IMR-90 (cell line): ENCODE measurements at regions of chr20 and their contacts with region 1.

Region 1: DNA sequence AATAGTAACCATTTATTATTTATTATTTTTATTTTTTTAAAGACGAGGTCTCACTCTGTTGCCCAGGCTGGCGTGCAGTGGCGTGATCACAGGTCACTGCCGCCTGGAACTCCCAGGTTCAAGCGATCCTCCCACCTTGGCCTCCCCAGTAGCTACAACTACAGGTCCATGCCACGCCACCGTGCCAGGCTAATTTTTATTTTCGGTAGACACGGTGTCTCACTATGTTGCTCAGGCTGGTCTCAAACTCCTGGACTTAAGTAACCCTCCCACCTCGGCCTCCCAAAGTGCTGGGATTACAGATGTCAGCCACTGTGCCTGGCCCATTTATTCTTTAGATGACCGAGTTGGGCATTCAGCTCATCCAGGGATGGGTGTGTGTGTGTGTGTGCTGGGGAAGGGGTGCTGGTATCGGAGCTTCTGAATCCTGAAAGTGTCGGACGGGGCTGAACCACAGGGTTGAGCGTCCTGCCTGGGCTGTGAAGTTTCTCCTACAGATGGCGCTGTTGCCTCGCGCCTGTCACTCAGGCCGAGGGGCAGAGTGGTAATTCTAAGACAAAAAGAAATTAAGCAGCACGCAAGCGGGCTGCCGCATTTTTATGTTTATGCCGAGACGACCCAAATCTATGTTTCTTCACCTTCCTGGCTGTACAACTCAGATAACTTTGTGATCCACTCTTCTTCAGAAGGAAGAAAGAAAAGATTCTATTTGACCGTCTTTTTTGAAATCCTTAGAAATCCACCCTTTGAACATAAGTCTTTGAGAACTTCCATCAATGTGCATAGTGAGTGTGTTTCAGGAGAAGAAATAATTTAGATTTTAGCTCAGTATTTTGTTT is 252.8 kb downstream of the CDH26 start:
- DNase-seq: peak; percentile 60
- ATAC-seq: peak; percentile 96
- H3K4me3 ChIP-seq: no peak overlapping the region
- H3K27ac ChIP-seq: no peak overlapping the region
- H3K4me1 ChIP-seq: no peaks in the 10 kb centered on the region
- H3K27me3 ChIP-seq: 0 out of 2 replicates have a peak, but pooled peaks cover 4% of the 10 kb centered on the region
- CTCF ChIP-seq: peak; percentile 97
- POLR2A ChIP-seq: peak; percentile 57
- RAD21 ChIP-seq: peak; percentile 99

Region 2: DNA sequence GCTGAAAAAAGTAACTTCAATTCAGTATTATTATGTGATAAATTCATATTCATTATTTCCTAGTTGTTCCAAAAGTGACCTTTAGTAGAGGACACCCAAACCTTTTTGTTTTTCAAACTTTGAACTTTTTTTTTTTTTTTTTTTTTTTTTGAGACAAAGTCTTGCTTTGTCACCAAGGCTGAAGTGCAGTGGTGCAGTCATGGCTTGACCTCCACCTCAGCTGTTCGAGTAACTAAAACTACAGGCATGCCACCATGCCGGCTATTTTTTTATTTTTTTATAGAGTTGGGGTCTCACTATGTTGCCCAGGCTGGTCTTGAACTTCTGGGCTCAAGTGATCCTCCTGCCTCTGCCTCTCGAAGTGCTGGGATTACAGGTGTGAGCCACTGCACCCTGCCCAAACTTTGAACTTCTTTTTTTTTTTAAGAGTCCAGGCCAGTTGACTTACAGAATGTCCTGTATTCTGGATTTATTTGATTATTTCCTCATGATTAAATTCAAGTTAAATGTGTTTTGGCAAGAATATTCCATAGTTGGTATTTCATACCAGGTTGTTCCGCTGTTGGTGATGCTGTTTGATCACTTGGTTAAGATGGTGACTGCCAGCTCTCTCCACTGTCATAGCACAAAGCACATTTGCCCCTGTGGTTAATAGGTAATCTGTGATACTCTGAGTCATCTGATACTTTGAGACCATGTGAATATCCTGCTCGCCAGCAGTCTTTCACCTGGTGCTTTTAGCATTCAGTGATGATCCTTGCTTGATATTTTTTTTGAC is 1773.9 kb before region 1 on chr20:
- CTCF ChIA-PET with region 1: no interaction called
- POLR2A ChIA-PET with region 1: no interaction called
- dilution Hi-C with region 1: no loop called
- in situ Hi-C with region 1: no loop called
- intact Hi-C with region 1: no loop called
- DNase-seq: no peak
- ATAC-seq: no peak
- H3K4me3 ChIP-seq: no peak overlapping the region
- H3K27ac ChIP-seq: no peak overlapping the region
- H3K4me1 ChIP-seq: peaks cover 15% of the 10 kb centered on the region
- H3K27me3 ChIP-seq: no peaks in the 10 kb centered on the region
- CTCF ChIP-seq: no peak
- POLR2A ChIP-seq: no peak
- RAD21 ChIP-seq: no peak

Region 3: GRCh38 chr20:60057123-60057801 is 153.7 kb before region 1 on chr20:
- CTCF ChIA-PET with region 1: interaction called, 7 read pairs
- POLR2A ChIA-PET with region 1: no interaction called
- dilution Hi-C with region 1: no loop called
- in situ Hi-C with region 1: no loop called
- intact Hi-C with region 1: loop called (anchors 1 kb)
- DNase-seq: peak; percentile 65
- ATAC-seq: peak; percentile 83
- H3K4me3 ChIP-seq: no peak overlapping the region
- H3K27ac ChIP-seq: no peak overlapping the region
- H3K4me1 ChIP-seq: peaks cover 9% of the 10 kb centered on the region; the same call in 1 of the 2 replicates
- H3K27me3 ChIP-seq: peaks cover 7% of the 10 kb centered on the region; the same call in 1 of the 2 replicates
- CTCF ChIP-seq: peak; percentile 93
- POLR2A ChIP-seq: no peak
- RAD21 ChIP-seq: peak; percentile 91

Region 4: GRCh38 chr20:60306105-60306504 is 95.1 kb after region 1 on chr20:
- CTCF ChIA-PET with region 1: no interaction called
- POLR2A ChIA-PET with region 1: no interaction called
- dilution Hi-C with region 1: no loop called
- in situ Hi-C with region 1: no loop called
- intact Hi-C with region 1: no loop called
- DNase-seq: no peak
- ATAC-seq: no peak
- H3K4me3 ChIP-seq: no peak overlapping the region
- H3K27ac ChIP-seq: no peak overlapping the region
- H3K4me1 ChIP-seq: no peaks in the 10 kb centered on the region
- H3K27me3 ChIP-seq: no peaks in the 10 kb centered on the region
- CTCF ChIP-seq: no peak
- POLR2A ChIP-seq: no peak
- RAD21 ChIP-seq: no peak

Region 5: DNA sequence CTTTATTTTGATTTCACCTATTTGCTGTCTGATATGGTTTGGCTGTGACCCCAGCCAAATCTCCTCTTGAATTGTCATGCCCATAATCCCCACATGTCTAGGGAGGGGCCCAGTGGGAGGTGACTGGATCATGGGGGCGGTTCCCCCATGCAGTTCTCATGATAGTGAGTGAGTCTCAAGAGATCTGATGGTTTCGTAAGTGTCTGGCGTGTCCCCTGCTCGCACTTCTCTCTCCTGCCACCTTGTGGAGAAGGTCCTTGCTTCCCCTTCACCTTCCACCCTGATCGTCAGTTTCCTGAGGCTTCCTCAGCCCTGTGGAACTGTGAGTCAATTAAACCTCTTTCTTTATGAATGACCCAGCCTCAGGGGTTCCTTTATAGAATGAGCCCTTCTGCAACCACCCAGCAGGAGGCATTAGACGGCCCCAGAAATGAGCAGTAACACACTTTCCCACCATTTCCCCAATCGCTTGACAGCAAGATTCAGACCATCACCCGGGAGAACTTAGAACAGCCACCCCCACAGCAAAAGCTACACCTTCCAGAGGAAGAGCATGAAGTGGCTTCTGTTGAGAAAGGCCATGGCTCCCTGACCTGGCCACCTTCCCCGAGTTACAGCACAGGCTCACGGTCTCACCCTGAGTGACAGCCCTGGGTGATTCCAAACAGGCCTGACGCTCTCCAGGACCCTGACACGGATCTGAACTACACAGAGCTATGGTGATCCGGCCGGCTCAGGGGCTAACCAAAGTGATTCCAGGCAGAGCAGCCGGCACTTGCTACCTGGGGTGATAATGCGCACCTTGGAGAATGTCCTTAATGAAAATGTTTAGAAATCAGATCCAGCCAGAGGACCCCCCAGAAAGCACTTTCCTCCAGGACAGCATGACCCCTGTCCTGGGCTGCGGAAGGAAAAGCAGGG is 909.9 kb after region 1 on chr20:
- CTCF ChIA-PET with region 1: interaction called, 3 read pairs
- POLR2A ChIA-PET with region 1: no interaction called
- dilution Hi-C with region 1: no loop called
- in situ Hi-C with region 1: loop called (anchors 25 kb)
- intact Hi-C with region 1: loop called (anchors 1 kb)
- DNase-seq: peak; percentile 69
- ATAC-seq: peak; percentile 63
- H3K4me3 ChIP-seq: no peak overlapping the region
- H3K27ac ChIP-seq: no peak overlapping the region
- H3K4me1 ChIP-seq: no peaks in the 10 kb centered on the region
- H3K27me3 ChIP-seq: no peaks in the 10 kb centered on the region
- CTCF ChIP-seq: peak; percentile 47
- POLR2A ChIP-seq: no peak
- RAD21 ChIP-seq: peak; percentile 45

Region 6: DNA sequence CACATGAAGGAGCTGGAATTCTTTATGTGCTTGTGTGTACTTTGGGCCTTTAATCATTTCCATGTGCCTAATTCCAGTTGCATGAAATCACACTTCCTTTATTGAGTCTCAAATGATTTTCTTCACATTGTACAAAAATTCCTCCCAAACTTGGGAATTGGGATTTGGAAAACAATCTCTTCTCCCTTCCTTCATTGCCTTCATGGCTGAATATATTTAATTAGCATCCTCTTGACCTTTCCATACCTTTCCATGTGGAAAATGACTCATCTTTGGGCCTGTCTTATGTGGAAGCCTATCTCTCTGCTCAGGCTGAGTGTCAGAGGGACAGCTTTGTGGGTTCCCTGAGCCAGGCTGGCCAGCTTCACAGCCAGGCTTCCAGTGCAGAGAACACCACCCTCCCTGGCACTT is 1008.0 kb after region 1 on chr20:
- CTCF ChIA-PET with region 1: interaction called, 3 read pairs
- POLR2A ChIA-PET with region 1: no interaction called
- dilution Hi-C with region 1: no loop called
- in situ Hi-C with region 1: loop called (anchors 10 kb)
- intact Hi-C with region 1: no loop called
- DNase-seq: peak; percentile 60
- ATAC-seq: peak; percentile 70
- H3K4me3 ChIP-seq: no peak overlapping the region
- H3K27ac ChIP-seq: peak overlapping the region; percentile 65
- H3K4me1 ChIP-seq: peaks cover 9% of the 10 kb centered on the region
- H3K27me3 ChIP-seq: peaks cover 10% of the 10 kb centered on the region
- CTCF ChIP-seq: no peak
- POLR2A ChIP-seq: no peak
- RAD21 ChIP-seq: no peak

Region 7: GRCh38 chr20:61263084-61263695 is 1052.2 kb after region 1 on chr20:
- CTCF ChIA-PET with region 1: no interaction called
- POLR2A ChIA-PET with region 1: no interaction called
- dilution Hi-C with region 1: no loop called
- in situ Hi-C with region 1: no loop called
- intact Hi-C with region 1: loop called (anchors 1 kb)
- DNase-seq: peak; percentile 17
- ATAC-seq: peak; percentile 78
- H3K4me3 ChIP-seq: no peak overlapping the region
- H3K27ac ChIP-seq: no peak overlapping the region
- H3K4me1 ChIP-seq: no peaks in the 10 kb centered on the region
- H3K27me3 ChIP-seq: no peaks in the 10 kb centered on the region; the same call in 1 of the 2 replicates
- CTCF ChIP-seq: peak; percentile 83
- POLR2A ChIP-seq: no peak
- RAD21 ChIP-seq: peak; percentile 62